ENCODE measurements at regions of chr11 and their contacts with region 1.

Region 1: DNA sequence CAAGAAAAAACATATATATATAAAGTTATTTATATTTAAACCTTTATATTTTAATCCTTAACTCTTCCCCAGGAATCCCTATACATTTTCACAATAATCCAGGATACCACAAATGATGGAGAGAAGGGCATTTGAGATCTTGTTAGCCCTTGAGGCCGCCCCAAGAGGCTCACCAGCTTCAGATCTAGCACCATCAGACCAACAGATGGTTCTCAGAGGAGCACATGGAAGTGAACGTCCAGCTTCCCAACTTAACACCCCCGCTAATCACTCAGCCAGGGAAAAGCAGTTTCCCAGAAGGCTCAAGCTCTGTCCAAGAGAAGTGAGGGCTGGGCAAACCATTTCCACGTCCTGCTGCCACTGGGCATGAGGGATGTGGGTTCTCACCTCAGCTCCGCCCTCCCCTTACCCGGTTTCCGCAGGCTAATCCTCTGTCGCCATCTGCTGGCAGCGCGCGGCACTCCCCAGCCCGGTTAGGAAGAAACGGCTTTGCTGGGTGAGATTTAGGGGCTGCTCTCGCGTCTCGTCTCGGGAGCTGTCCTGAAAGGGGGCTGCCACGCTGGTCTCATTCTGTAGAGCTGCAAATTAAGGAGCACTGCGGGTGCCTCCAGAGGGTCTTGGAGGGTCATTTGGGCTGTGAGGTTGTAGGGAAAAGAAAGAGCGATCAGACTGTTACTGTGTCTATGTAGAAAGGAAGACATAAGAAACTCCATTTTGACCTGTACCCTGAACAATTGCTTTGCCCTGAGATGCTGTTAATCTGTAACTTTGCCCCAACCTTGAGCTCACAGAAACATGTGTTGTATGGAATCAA is 6.8 kb upstream of the FAM111A start:
- DNase-seq: peak; percentile 73 to 77
- ATAC-seq: peak; percentile 100
- H3K4me3 ChIP-seq: no peak overlapping the region
- H3K27ac ChIP-seq: 0 out of 6 replicates have a peak overlapping the region, but pooled peaks of 1 of the 2 experiments have one; percentile 37
- H3K4me1 ChIP-seq: no peaks in the 10 kb centered on the region
- CTCF ChIP-seq: peak; percentile 87
- EP300 ChIP-seq: no peak
- POLR2A ChIP-seq: no peak
- RAD21 ChIP-seq: peak; percentile 90 to 94

Region 2: GRCh38 chr11:58654079-58654907 is 481.6 kb before region 1 on chr11:
- CTCF ChIA-PET with region 1: interaction called, 10 read pairs
- POLR2A ChIA-PET with region 1: no interaction called
- DNase-seq: peak; percentile 67 to 77
- ATAC-seq: peak; percentile 98 to 100
- H3K4me3 ChIP-seq: no peak overlapping the region
- H3K27ac ChIP-seq: no peak overlapping the region
- H3K4me1 ChIP-seq: peaks cover 4% of the 10 kb centered on the region; the same call in 1 of the 3 replicates
- CTCF ChIP-seq: peak; percentile 87
- EP300 ChIP-seq: no peak
- POLR2A ChIP-seq: no peak
- RAD21 ChIP-seq: peak; percentile 71 to 72

Region 3: GRCh38 chr11:59053387-59053786 is 82.5 kb before region 1 on chr11:
- CTCF ChIA-PET with region 1: interaction called, 10 read pairs
- POLR2A ChIA-PET with region 1: no interaction called
- DNase-seq: peak in 1 of 2 experiments; percentile 67
- ATAC-seq: peak; percentile 58 to 80; a peak in 4 of 6 replicates
- H3K4me3 ChIP-seq: no peak overlapping the region
- H3K27ac ChIP-seq: no peak overlapping the region
- H3K4me1 ChIP-seq: 0 out of 3 replicates have a peak, but pooled peaks cover 2% of the 10 kb centered on the region
- CTCF ChIP-seq: peak; percentile 51
- EP300 ChIP-seq: no peak
- POLR2A ChIP-seq: no peak
- RAD21 ChIP-seq: peak in 1 of 2 experiments; percentile 9; a peak in 1 of 5 replicates

Region 4: GRCh38 chr11:59097113-59097708 is 38.6 kb before region 1 on chr11:
- CTCF ChIA-PET with region 1: interaction called, 25 read pairs
- POLR2A ChIA-PET with region 1: no interaction called
- DNase-seq: peak in 1 of 2 experiments; percentile 72
- ATAC-seq: peak; percentile 63 to 87; a peak in 4 of 6 replicates
- H3K4me3 ChIP-seq: no peak overlapping the region
- H3K27ac ChIP-seq: no peak overlapping the region
- H3K4me1 ChIP-seq: peaks cover 4% of the 10 kb centered on the region; the same call in 1 of the 3 replicates
- CTCF ChIP-seq: peak; percentile 53
- EP300 ChIP-seq: no peak
- POLR2A ChIP-seq: no peak
- RAD21 ChIP-seq: peak; percentile 23 to 46; a peak in 3 of 5 replicates

Region 5: DNA sequence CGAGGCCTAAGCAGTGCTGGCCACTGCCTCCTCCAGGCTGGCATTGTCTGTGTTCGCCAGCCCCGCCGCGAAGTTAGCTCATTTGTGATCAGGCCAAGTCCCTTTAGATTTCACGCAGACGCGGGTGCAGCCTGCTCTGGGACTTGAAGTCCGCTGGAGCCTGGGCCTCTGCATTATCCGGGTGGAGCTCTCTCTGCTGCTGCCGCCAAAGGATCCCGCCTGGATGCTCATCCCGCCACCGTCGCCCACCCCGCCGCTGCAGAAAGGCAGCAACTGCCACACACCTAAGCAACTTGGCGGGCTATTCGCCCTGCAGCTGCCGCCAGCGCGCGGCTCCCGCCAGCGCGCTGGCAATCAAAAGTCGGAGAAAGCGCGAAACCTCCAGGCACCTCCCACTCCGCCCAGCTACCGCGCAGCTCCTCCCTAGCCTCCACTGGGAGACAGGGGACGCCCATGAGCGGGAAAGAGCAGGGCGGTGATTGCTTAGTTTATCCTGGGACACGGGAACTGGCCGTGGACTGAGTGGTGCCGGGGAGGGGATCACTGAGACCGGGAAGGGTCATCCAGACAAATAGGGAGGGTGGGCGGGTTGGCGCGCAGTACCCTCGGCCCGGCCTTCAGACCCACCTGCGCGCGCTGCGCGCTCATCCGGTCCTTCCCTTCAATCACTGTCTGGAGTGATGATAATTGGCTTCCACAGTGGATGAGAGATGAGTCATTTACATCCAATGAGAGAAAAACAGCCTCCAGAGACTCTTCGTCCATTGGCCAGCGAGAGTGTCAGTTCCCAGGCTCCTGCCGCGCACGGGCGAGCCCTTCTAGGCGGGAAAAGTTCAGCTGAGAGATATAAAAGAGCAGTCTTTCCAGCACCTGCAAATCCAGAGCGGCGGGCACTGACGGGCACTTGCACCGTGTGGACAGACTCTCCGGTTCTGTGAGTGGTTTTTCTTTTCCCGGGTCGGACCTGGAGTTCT is 29.2 kb before region 1 on chr11 and contains the start of gene FAM111B:
- CTCF ChIA-PET with region 1: interaction called, 19 read pairs
- POLR2A ChIA-PET with region 1: no interaction called
- DNase-seq: peak; percentile 89 to 94
- ATAC-seq: peak; percentile 96 to 98
- H3K4me3 ChIP-seq: peak within 1 kb of the TSS; percentile 67
- H3K27ac ChIP-seq: peak within 1 kb of the TSS; percentile 69 to 80
- H3K4me1 ChIP-seq: peaks cover 19% of the 10 kb centered on the region
- CTCF ChIP-seq: no peak
- EP300 ChIP-seq: no peak
- POLR2A ChIP-seq: no peak
- RAD21 ChIP-seq: no peak
- polyA plus RNA-seq, gene FAM111B: 6.0 and 6.9 TPM in 2 replicates

Region 6: GRCh38 chr11:59119826-59120225 is 16.0 kb before region 1 on chr11:
- CTCF ChIA-PET with region 1: interaction called, 10 read pairs
- POLR2A ChIA-PET with region 1: no interaction called
- DNase-seq: no peak
- ATAC-seq: no peak
- H3K4me3 ChIP-seq: no peak overlapping the region
- H3K27ac ChIP-seq: no peak overlapping the region
- H3K4me1 ChIP-seq: no peaks in the 10 kb centered on the region
- CTCF ChIP-seq: no peak
- EP300 ChIP-seq: no peak
- POLR2A ChIP-seq: no peak
- RAD21 ChIP-seq: no peak

Region 7: GRCh38 chr11:59158206-59159068 is 22.6 kb after region 1 on chr11:
- CTCF ChIA-PET with region 1: interaction called, 13 read pairs
- POLR2A ChIA-PET with region 1: no interaction called
- DNase-seq: peak; percentile 72 to 74
- ATAC-seq: peak; percentile 94 to 97
- H3K4me3 ChIP-seq: no peak overlapping the region
- H3K27ac ChIP-seq: no peak overlapping the region
- H3K4me1 ChIP-seq: no peaks in the 10 kb centered on the region
- CTCF ChIP-seq: peak; percentile 87
- EP300 ChIP-seq: no peak
- POLR2A ChIP-seq: no peak
- RAD21 ChIP-seq: peak; percentile 86 to 90

Region 8: DNA sequence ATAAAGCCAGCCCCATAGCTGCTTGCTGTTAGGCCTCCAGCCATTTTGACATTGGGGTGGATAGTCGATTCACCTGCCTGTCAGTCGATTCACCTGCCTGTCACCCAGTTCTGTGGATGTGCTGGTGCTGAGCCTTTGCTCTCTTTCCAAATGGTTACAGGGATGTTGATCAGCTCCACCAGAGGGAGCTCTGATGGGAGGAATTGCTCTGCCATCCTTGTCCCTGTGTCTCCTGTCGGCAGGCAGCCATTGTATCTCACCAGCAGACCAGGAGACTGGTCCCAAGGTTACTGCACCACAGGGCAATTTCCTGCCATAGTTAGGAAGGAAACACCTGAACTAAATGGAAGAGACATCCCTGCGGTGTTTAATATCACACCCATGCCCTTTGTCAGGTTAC is 70.8 kb after region 1 on chr11:
- CTCF ChIA-PET with region 1: no interaction called
- POLR2A ChIA-PET with region 1: no interaction called
- DNase-seq: peak; percentile 48 to 50
- ATAC-seq: peak; percentile 78 to 93
- H3K4me3 ChIP-seq: no peak overlapping the region
- H3K27ac ChIP-seq: no peak overlapping the region
- H3K4me1 ChIP-seq: no peaks in the 10 kb centered on the region
- CTCF ChIP-seq: peak; percentile 37; the same call in 2 of the 3 replicates
- EP300 ChIP-seq: no peak
- POLR2A ChIP-seq: no peak
- RAD21 ChIP-seq: peak in 1 of 2 experiments; percentile 37; a peak in 3 of 5 replicates

Region 9: GRCh38 chr11:59394186-59394585 is 258.3 kb after region 1 on chr11:
- CTCF ChIA-PET with region 1: no interaction called
- POLR2A ChIA-PET with region 1: no interaction called
- DNase-seq: no peak
- ATAC-seq: no peak
- H3K4me3 ChIP-seq: no peak overlapping the region
- H3K27ac ChIP-seq: no peak overlapping the region
- H3K4me1 ChIP-seq: no peaks in the 10 kb centered on the region
- CTCF ChIP-seq: no peak
- EP300 ChIP-seq: no peak
- POLR2A ChIP-seq: no peak
- RAD21 ChIP-seq: no peak

Measured in A549 (cell line).